ENCODE measurements at regions of chr6 and their contacts with region 1.

Region 1: DNA sequence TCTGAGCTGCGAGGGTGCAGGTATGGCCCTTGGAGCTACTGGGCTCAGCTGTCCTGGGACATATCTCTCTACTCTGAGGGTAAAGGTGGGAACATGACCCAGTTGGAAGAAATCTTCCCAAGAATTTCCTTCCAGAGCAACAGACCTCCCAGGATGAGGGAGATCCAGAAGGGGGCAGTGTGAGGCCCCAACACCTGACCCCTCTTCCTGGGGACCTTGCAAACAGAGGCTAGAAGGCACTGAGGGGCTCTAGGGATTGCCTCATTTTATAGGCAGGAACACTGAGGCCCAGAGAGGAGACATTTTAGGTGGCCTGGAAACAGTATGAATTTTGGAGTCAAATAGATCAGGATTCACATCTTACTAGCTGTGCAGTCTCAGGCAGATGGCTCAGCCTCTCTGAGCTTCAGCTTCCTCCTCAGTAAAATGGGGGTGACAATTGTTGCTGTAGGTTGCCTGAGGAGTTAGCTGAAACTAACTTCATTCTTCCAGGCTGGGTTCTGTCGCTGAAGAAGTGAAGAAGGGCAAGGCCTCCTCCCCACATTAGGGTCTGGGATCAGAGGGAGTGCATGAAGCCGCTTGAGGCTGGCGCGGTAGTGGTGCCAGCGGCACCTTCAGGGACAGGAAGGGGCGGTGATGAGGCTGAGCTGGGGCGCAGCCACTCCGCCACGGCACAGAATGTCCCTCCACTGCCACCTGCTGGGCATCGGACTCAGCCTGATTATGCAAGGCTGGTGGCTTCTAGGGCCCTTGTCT is 11.4 kb downstream of the KCNK17 start:
- DNase-seq: peak; percentile 93
- ATAC-seq: peak; percentile 99
- H3K4me3 Mint-ChIP-seq: peak overlapping the region; percentile 46
- H3K27ac Mint-ChIP-seq: peak overlapping the region; percentile 70
- H3K4me1 Mint-ChIP-seq: peaks cover 10% of the 10 kb centered on the region
- H3K27me3 Mint-ChIP-seq: peaks cover 10% of the 10 kb centered on the region

Region 2: GRCh38 chr6:38973178-38974054 is 329.4 kb before region 1 on chr6:
- CTCF ChIA-PET with region 1: interaction called, 10 read pairs
- POLR2A ChIA-PET with region 1: no interaction called
- DNase-seq: peak; percentile 48
- ATAC-seq: peak; percentile 74
- H3K4me3 Mint-ChIP-seq: no peak overlapping the region
- H3K27ac Mint-ChIP-seq: no peak overlapping the region
- H3K4me1 Mint-ChIP-seq: no peaks in the 10 kb centered on the region
- H3K27me3 Mint-ChIP-seq: peaks cover 33% of the 10 kb centered on the region

Region 3: GRCh38 chr6:39088331-39088730 is 214.5 kb before region 1 on chr6:
- CTCF ChIA-PET with region 1: interaction called, 12 read pairs
- POLR2A ChIA-PET with region 1: no interaction called
- DNase-seq: peak; percentile 42
- ATAC-seq: peak; percentile 61
- H3K4me3 Mint-ChIP-seq: no peak overlapping the region
- H3K27ac Mint-ChIP-seq: no peak overlapping the region
- H3K4me1 Mint-ChIP-seq: peaks cover 13% of the 10 kb centered on the region
- H3K27me3 Mint-ChIP-seq: peaks cover 44% of the 10 kb centered on the region

Region 4: DNA sequence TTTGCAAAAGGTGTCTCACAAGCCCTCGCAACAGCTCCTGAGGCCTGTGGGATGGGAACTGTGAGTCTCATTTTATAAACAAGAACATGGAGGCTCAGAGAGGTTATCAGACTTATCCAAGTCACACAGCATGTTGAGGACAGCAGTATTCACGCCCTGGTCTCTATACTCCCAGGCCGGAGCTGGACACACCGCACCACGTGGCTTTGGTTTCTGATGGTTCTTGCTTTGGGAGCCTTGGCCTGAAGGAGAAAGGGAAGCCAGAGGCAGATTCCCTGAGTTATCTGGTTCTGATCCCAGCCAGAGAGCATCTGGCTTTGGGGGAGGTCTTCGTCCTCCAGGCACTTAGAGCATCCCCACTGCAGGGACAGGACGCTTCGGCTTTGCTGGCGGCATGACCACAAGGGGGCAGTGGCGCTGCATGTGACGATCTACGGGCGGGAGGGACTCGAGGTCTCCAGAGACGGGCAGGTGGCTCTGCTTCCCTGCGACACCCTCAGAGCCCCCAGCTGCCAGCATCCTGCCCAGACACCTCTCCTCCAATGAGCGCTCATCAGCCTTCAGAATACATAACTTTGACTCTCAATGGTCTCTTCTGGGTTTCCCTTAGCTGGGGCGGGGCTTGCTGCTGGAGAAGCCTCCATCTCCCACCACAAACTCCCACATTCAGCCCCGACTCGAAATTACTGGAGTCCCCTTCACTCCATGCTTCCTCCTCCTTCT is 136.5 kb before region 1 on chr6:
- CTCF ChIA-PET with region 1: interaction called, 179 read pairs
- POLR2A ChIA-PET with region 1: no interaction called
- DNase-seq: peak; percentile 89
- ATAC-seq: peak; percentile 96
- H3K4me3 Mint-ChIP-seq: no peak overlapping the region
- H3K27ac Mint-ChIP-seq: peak overlapping the region; percentile 33
- H3K4me1 Mint-ChIP-seq: peaks cover 9% of the 10 kb centered on the region
- H3K27me3 Mint-ChIP-seq: peaks cover 2% of the 10 kb centered on the region

Region 5: DNA sequence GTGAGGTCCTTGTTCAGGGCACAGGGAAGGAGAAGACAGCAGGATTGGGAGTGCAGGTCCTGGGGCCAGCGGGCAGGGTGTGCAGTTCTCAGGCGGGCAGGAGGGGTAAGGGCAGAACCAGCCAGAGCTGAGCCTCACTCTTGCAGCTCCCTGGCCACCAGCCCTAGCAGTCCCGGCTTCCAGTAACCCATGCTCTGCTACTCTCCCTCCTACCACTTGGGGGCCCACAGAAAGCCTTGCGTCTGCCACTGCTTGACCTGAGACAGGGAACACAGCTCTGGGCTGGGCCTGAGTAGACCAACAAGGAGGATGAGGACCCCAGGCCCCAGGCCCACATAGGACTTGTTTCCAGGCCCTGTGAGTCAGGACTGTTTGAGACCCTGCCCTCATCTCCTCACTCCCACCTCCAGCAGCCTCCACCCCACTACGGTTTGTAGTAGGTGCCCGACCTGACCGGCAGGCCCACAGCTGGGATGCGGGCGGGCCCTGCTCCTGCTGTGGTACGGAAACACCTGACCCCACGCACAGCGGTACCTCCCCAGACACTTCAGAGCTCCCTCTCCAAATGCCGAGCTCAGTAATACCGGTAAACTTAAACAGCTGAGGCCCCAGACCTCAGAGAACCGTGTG is 112.8 kb before region 1 on chr6:
- CTCF ChIA-PET with region 1: interaction called, 38 read pairs
- POLR2A ChIA-PET with region 1: no interaction called
- DNase-seq: peak; percentile 30
- ATAC-seq: peak; percentile 49
- H3K4me3 Mint-ChIP-seq: no peak overlapping the region
- H3K27ac Mint-ChIP-seq: no peak overlapping the region
- H3K4me1 Mint-ChIP-seq: peaks cover 15% of the 10 kb centered on the region
- H3K27me3 Mint-ChIP-seq: no peaks in the 10 kb centered on the region

Region 6: DNA sequence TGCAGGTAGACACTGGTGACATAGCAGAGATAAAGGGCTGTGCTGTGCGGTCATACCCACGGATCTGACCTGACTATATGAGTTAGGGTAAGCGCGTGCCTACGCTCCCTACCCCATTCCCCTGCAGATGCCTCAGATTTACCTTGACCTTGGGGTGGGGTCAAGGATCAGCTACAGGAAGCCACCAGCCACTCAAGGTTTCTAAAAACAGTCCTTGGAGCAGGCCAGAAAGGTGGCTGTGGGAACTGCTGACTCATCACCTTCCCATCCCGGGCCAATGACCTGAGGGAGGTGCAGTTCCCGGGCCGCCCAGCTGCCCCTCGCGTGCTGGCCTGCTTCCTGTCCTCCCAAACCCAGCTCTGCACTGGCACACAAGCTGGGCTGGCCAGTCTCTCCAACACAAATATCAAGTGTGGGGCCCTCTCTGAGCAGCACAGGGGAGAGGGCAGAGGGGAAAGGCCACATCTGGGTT is 96.6 kb before region 1 on chr6:
- CTCF ChIA-PET with region 1: no interaction called
- POLR2A ChIA-PET with region 1: no interaction called
- DNase-seq: no peak
- ATAC-seq: no peak
- H3K4me3 Mint-ChIP-seq: no peak overlapping the region
- H3K27ac Mint-ChIP-seq: peak overlapping the region; percentile 8
- H3K4me1 Mint-ChIP-seq: peaks cover 63% of the 10 kb centered on the region
- H3K27me3 Mint-ChIP-seq: no peaks in the 10 kb centered on the region

Region 7: GRCh38 chr6:39228992-39229767 is 73.7 kb before region 1 on chr6 and contains the start of gene KCNK5:
- CTCF ChIA-PET with region 1: interaction called, 32 read pairs
- POLR2A ChIA-PET with region 1: no interaction called
- DNase-seq: peak; percentile 91
- ATAC-seq: peak; percentile 95
- H3K4me3 Mint-ChIP-seq: peak within 1 kb of the TSS; percentile 88
- H3K27ac Mint-ChIP-seq: peak within 1 kb of the TSS; percentile 94
- H3K4me1 Mint-ChIP-seq: peaks cover 50% of the 10 kb centered on the region
- H3K27me3 Mint-ChIP-seq: no peaks in the 10 kb centered on the region
- total RNA-seq, gene KCNK5: 12.0 TPM

Region 8: DNA sequence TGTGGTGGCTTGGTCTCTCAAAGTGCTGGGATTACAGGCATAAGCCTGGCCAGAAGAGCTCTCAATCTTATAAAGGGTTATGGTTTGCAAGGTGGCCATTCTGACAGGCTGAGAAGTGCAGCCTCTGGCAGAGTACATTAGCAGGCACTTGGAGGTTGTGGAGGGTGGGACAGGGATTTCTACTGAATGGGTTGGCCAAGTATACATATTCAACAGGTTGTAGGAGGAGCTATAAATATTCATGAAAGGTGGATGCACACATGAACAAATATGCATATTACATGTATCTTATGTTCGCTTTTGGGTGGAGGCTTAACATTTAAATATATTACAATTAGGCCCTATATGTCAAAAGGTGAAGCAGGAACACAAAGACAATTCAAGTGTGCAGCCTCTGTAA is 53.6 kb before region 1 on chr6:
- CTCF ChIA-PET with region 1: no interaction called
- POLR2A ChIA-PET with region 1: no interaction called
- DNase-seq: no peak
- ATAC-seq: no peak
- H3K4me3 Mint-ChIP-seq: no peak overlapping the region
- H3K27ac Mint-ChIP-seq: no peak overlapping the region
- H3K4me1 Mint-ChIP-seq: peaks cover 7% of the 10 kb centered on the region
- H3K27me3 Mint-ChIP-seq: peaks cover 6% of the 10 kb centered on the region